IMR-90 (cell line): ENCODE measurements at regions of chr11 and their contacts with region 1.

Region 1: GRCh38 chr11:22875869-22876473 is 15.7 kb upstream of the CCDC179 start:
- DNase-seq: peak; percentile 89
- ATAC-seq: peak; percentile 79
- H3K4me3 ChIP-seq: no peak overlapping the region
- H3K27ac ChIP-seq: no peak overlapping the region
- H3K4me1 ChIP-seq: peaks cover 4% of the 10 kb centered on the region
- H3K27me3 ChIP-seq: no peaks in the 10 kb centered on the region
- CTCF ChIP-seq: peak; percentile 99
- POLR2A ChIP-seq: no peak
- RAD21 ChIP-seq: peak; percentile 90

Region 2: DNA sequence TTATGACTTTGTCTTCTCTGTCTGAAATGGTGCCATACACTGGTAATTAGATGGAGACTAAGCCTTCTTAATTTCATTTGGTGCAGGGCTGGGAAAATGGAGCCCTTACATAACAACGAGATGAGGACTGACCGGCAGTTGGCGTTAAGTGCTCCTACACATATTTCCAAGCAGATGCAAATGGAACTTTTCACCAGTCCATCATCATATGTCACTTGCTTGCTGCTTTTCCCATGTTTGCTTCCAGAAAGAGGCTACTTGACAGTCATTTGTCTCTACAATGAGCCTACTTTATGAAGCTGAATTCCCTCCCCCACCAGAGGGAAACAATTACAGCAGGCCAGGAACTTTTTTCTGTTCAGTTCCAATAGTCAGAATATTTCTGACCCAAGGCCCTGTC is 78.9 kb before region 1 on chr11:
- CTCF ChIA-PET with region 1: no interaction called
- POLR2A ChIA-PET with region 1: no interaction called
- dilution Hi-C with region 1: no loop called
- in situ Hi-C with region 1: no loop called
- intact Hi-C with region 1: no loop called
- DNase-seq: no peak
- ATAC-seq: no peak
- H3K4me3 ChIP-seq: no peak overlapping the region
- H3K27ac ChIP-seq: no peak overlapping the region
- H3K4me1 ChIP-seq: peaks cover 4% of the 10 kb centered on the region; the same call in 1 of the 2 replicates
- H3K27me3 ChIP-seq: no peaks in the 10 kb centered on the region
- CTCF ChIP-seq: no peak
- POLR2A ChIP-seq: no peak
- RAD21 ChIP-seq: no peak

Region 3: GRCh38 chr11:23021287-23021863 is 145.4 kb after region 1 on chr11:
- CTCF ChIA-PET with region 1: interaction called, 3 read pairs
- POLR2A ChIA-PET with region 1: no interaction called
- dilution Hi-C with region 1: no loop called
- in situ Hi-C with region 1: no loop called
- intact Hi-C with region 1: loop called (anchors 2 kb)
- DNase-seq: peak; percentile 51
- ATAC-seq: peak; percentile 86
- H3K4me3 ChIP-seq: no peak overlapping the region
- H3K27ac ChIP-seq: no peak overlapping the region
- H3K4me1 ChIP-seq: 0 out of 2 replicates have a peak, but pooled peaks cover 3% of the 10 kb centered on the region
- H3K27me3 ChIP-seq: no peaks in the 10 kb centered on the region
- CTCF ChIP-seq: peak; percentile 81
- POLR2A ChIP-seq: 0 out of 2 replicates have a peak, but pooled peaks have one; percentile 27
- RAD21 ChIP-seq: peak; percentile 85

Region 4: DNA sequence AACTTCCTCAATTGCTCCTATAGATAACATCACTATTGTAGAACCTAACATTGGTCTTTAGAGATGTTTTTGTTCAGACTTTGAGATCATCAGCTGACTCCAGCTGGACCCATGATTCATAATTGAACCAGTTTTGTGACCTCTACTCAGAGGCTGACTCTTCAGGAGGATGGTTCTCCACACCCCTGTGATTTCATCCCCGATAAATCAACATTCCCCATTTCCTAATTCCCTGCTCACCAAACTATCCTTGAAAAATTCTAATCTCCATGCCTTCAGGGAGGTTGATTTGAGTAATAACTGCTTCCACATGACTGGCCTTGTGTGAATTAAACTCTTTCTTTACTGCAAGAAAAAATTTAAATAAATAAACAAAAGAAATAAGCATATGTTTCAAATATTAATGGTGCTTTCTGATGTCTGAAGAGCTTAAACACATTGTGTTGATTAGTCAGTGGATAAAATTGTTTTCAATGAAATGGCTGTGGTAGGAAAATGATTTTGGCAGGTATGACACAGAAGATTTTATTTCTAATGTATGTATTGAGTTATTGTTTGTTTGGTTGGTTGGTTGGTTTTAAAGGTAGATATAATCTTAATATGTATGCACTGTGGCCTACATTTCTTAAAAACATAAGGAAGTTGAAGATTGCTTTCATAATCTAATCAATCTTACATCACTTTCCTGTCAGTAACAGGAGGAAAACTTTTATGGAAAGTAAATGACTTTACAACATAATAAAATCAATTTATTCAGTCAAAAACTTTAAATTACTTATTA is 412.2 kb after region 1 on chr11:
- CTCF ChIA-PET with region 1: no interaction called
- POLR2A ChIA-PET with region 1: no interaction called
- dilution Hi-C with region 1: no loop called
- in situ Hi-C with region 1: no loop called
- intact Hi-C with region 1: no loop called
- DNase-seq: peak; percentile 94
- ATAC-seq: peak; percentile 79
- H3K4me3 ChIP-seq: no peak overlapping the region
- H3K27ac ChIP-seq: no peak overlapping the region
- H3K4me1 ChIP-seq: peaks cover 2% of the 10 kb centered on the region; the same call in 1 of the 2 replicates
- H3K27me3 ChIP-seq: no peaks in the 10 kb centered on the region
- CTCF ChIP-seq: no peak
- POLR2A ChIP-seq: no peak
- RAD21 ChIP-seq: no peak

Region 5: GRCh38 chr11:23991165-23991539 is 1115.2 kb after region 1 on chr11:
- CTCF ChIA-PET with region 1: no interaction called
- POLR2A ChIA-PET with region 1: interaction called, 3 read pairs
- dilution Hi-C with region 1: no loop called
- in situ Hi-C with region 1: no loop called
- intact Hi-C with region 1: loop called (anchors 10 kb)
- DNase-seq: peak; percentile 90
- ATAC-seq: peak; percentile 68
- H3K4me3 ChIP-seq: no peak overlapping the region
- H3K27ac ChIP-seq: peak overlapping the region; percentile 96
- H3K4me1 ChIP-seq: peaks cover 21% of the 10 kb centered on the region
- H3K27me3 ChIP-seq: no peaks in the 10 kb centered on the region
- CTCF ChIP-seq: no peak
- POLR2A ChIP-seq: no peak
- RAD21 ChIP-seq: no peak

Region 6: GRCh38 chr11:24234822-24235508 is 1359.0 kb after region 1 on chr11:
- CTCF ChIA-PET with region 1: no interaction called
- POLR2A ChIA-PET with region 1: no interaction called
- dilution Hi-C with region 1: no loop called
- in situ Hi-C with region 1: no loop called
- intact Hi-C with region 1: loop called (anchors 5 kb)
- DNase-seq: peak; percentile 79
- ATAC-seq: peak; percentile 64
- H3K4me3 ChIP-seq: no peak overlapping the region
- H3K27ac ChIP-seq: no peak overlapping the region; the same call in 1 of the 2 replicates
- H3K4me1 ChIP-seq: peaks cover 8% of the 10 kb centered on the region
- H3K27me3 ChIP-seq: no peaks in the 10 kb centered on the region
- CTCF ChIP-seq: peak; percentile 56
- POLR2A ChIP-seq: no peak
- RAD21 ChIP-seq: peak; percentile 73

Region 7: DNA sequence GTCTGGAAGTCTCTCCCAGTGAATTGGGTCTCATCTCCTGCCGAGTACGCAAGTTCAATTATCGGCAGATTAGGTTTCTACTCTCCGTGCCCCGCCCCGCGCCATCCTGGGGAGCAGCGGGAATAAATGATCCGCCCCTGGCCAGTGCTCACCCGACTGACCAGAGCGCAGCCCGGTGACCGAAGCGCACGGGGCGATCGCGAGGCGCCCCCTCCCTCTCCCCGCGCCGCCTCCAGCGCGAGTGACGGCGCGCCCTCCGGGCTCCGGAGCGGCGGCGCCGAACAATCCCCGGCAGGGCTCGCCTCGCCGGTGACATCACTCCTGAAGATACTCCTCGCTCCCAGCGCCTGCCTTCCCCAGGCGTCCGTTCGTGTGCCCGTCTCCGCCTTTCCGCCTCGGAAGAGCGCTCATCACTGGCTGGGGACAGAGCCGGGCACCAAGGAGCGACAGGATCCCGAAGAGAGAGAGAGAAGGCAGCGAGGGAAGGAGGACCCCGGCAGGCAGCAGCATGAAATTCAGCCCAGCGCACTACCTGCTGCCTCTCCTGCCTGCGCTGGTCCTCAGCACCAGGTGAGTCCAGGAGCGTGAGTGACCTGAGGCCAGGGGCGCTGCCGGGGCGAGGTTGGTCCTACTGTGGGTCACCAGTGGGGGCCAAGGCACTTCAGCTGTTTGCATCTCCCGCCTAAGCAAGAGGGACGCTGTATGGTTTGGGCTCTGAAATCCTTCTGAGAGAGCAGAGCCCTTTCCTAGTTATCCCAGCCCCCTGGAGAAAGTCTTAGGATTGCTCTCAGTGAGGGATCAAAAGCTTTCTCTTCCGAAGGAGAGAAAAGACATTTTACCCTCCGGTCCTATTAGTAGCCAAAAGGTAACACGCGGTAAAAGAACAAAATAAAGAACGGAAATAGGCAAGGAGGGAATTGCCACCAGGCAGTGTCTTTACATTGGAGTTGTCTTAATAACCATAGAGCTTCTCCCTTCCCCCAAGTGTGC is 1621.1 kb after region 1 on chr11 and contains the start of gene LUZP2:
- CTCF ChIA-PET with region 1: no interaction called
- POLR2A ChIA-PET with region 1: no interaction called
- dilution Hi-C with region 1: no loop called
- in situ Hi-C with region 1: no loop called
- intact Hi-C with region 1: loop called (anchors 10 kb)
- DNase-seq: peak; percentile 51
- ATAC-seq: peak; percentile 96
- H3K4me3 ChIP-seq: peak within 1 kb of the TSS; percentile 61
- H3K27ac ChIP-seq: peak within 1 kb of the TSS; percentile 2; the same call in 1 of the 2 replicates
- H3K4me1 ChIP-seq: no peaks in the 10 kb centered on the region; the same call in 1 of the 2 replicates
- H3K27me3 ChIP-seq: no peaks in the 10 kb centered on the region
- CTCF ChIP-seq: no peak
- POLR2A ChIP-seq: no peak
- RAD21 ChIP-seq: no peak; the same call in 1 of the 2 replicates
- total RNA-seq, gene LUZP2: 2.0 and 2.2 TPM in 2 replicates